Activated CD4-positive, alpha-beta T cell treated with anti-CD3 and anti-CD28 coated beads, Interleukin-2, amount 10 ng/mL, durations not matched to agents 24 days and 14 days (primary cell): ENCODE measurements at regions of chr14 and their contacts with region 1.

Region 1: GRCh38 chr14:71267007-71267513 is 359.8 kb downstream of the PCNX1 start:
- DNase-seq: peak; percentile 67
- H3K4me3 Mint-ChIP-seq: peak overlapping the region; percentile 36
- H3K27ac Mint-ChIP-seq: peak overlapping the region; percentile 63
- H3K4me1 Mint-ChIP-seq: peaks cover 32% of the 10 kb centered on the region
- H3K27me3 Mint-ChIP-seq: peaks cover 9% of the 10 kb centered on the region

Region 2: DNA sequence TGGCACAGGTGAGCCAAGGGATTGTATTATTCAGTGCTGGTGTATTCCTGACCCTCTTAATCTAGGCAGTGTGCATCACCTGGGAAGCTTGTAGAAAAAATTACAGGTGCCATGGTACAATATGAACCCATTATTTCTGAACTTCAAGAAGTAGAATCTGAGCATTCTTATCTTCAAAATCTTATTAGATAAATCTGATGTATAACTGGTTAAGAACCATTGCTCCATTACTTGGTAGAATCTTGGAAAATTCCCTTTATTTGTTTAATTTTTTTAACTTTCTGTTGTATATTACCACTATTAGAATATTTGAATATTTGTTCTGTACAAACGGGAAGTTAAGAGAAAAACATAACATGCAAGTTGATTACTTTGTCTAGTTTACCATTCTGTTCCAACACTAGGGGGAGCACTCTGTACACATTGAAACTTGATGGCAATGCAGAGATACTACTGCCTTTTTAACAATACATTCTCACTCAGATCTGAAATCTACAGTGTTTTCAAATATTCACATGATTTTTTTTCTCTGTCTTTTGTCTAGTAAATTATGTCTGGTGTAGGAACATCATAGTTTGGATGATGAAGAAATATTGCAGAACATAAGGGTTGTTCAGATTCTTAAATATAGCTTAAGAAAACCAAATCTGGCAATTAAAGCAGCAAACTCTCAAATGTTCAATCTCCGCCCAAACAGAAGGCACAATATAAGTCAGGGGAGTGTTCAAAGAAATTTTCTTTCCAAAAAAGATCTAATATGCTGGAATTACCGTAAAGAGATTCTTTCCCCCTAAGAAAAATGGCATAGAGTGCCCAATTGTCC is 163.2 kb before region 1 on chr14:
- intact Hi-C with region 1: no loop called
- DNase-seq: peak; percentile 81
- H3K4me3 Mint-ChIP-seq: no peak overlapping the region
- H3K27ac Mint-ChIP-seq: no peak overlapping the region
- H3K4me1 Mint-ChIP-seq: peaks cover 14% of the 10 kb centered on the region
- H3K27me3 Mint-ChIP-seq: no peaks in the 10 kb centered on the region

Region 3: GRCh38 chr14:71221119-71221518 is 45.9 kb before region 1 on chr14:
- intact Hi-C with region 1: loop called (anchors 1 kb)
- DNase-seq: no peak
- H3K4me3 Mint-ChIP-seq: no peak overlapping the region
- H3K27ac Mint-ChIP-seq: no peak overlapping the region
- H3K4me1 Mint-ChIP-seq: peaks cover 15% of the 10 kb centered on the region
- H3K27me3 Mint-ChIP-seq: no peaks in the 10 kb centered on the region

Region 4: GRCh38 chr14:71245659-71246361 is 21.2 kb before region 1 on chr14:
- intact Hi-C with region 1: loop called (anchors 2 kb)
- DNase-seq: peak; percentile 77
- H3K4me3 Mint-ChIP-seq: peak overlapping the region; percentile 36
- H3K27ac Mint-ChIP-seq: peak overlapping the region; percentile 75
- H3K4me1 Mint-ChIP-seq: peaks cover 44% of the 10 kb centered on the region
- H3K27me3 Mint-ChIP-seq: no peaks in the 10 kb centered on the region

Region 5: DNA sequence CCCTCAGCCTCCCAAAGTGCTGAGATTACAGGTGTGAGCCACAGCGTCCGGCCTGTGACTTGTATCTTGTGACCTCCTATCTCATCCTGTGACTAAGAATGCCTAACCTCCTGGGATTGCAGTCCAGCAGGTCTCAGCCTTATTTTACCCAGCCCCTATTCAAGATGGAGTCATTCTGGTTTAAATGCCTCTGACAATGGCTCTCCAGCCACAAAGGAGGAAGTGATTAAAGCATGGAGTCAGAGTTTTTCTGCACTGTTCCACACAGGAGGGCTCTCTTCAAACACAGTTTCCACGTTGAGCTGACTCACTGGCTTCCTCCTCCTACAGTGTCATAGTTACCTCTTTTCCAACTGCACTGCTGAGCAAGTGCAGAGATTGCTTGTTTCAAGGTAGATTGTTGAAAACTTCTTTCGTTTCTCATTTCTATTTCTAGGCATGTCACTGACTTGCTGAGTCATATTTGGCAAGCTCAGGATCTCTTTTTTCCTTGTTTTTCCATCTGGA is 24.0 kb after region 1 on chr14:
- intact Hi-C with region 1: loop called (anchors 1 kb)
- DNase-seq: peak; percentile 73
- H3K4me3 Mint-ChIP-seq: no peak overlapping the region
- H3K27ac Mint-ChIP-seq: peak overlapping the region; percentile 87
- H3K4me1 Mint-ChIP-seq: peaks cover 18% of the 10 kb centered on the region
- H3K27me3 Mint-ChIP-seq: no peaks in the 10 kb centered on the region

Region 6: GRCh38 chr14:71355324-71356201 is 88.5 kb after region 1 on chr14:
- intact Hi-C with region 1: no loop called
- DNase-seq: no peak
- H3K4me3 Mint-ChIP-seq: no peak overlapping the region
- H3K27ac Mint-ChIP-seq: no peak overlapping the region
- H3K4me1 Mint-ChIP-seq: peaks cover 31% of the 10 kb centered on the region
- H3K27me3 Mint-ChIP-seq: no peaks in the 10 kb centered on the region

Region 7: DNA sequence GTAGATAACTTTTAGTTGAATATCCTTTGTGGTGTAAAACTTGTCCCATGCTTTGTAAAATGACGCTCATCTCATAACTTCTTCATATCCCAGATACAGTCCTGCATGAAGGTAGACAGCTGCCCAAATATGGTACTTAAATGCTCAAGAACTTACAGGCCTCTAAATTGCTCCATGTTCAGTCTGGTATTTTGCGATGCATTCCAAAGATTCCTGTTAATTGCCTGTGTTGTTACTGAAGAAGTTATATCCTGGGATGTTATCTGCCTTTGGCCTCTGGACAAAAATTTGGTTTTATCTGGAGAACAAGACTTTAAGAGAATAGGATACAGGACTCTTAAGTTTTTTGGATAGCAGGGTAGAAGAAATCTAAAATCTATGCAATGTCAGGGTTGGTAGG is 113.2 kb after region 1 on chr14:
- intact Hi-C with region 1: no loop called
- DNase-seq: peak; percentile 26
- H3K4me3 Mint-ChIP-seq: no peak overlapping the region
- H3K27ac Mint-ChIP-seq: no peak overlapping the region
- H3K4me1 Mint-ChIP-seq: peaks cover 25% of the 10 kb centered on the region
- H3K27me3 Mint-ChIP-seq: no peaks in the 10 kb centered on the region